Panc1 (cell line): ENCODE measurements at regions of chr5 and their contacts with region 1.

Region 1: GRCh38 chr5:932628-933250 is 40.1 kb downstream of the TRIP13 start:
- DNase-seq: no peak
- ATAC-seq: no peak
- H3K4me3 ChIP-seq: no peak overlapping the region
- H3K27ac ChIP-seq: no peak overlapping the region
- H3K4me1 ChIP-seq: no peaks in the 10 kb centered on the region
- H3K27me3 ChIP-seq: no peaks in the 10 kb centered on the region
- CTCF ChIP-seq: no peak

Region 2: GRCh38 chr5:998246-999031 is 65.7 kb after region 1 on chr5:
- CTCF ChIA-PET with region 1: no interaction called
- POLR2A ChIA-PET with region 1: interaction called, 15 read pairs
- in situ Hi-C with region 1: no loop called
- intact Hi-C with region 1: no loop called
- DNase-seq: no peak
- ATAC-seq: no peak
- H3K4me3 ChIP-seq: no peak overlapping the region
- H3K27ac ChIP-seq: no peak overlapping the region
- H3K4me1 ChIP-seq: no peaks in the 10 kb centered on the region
- H3K27me3 ChIP-seq: no peaks in the 10 kb centered on the region
- CTCF ChIP-seq: no peak

Region 3: DNA sequence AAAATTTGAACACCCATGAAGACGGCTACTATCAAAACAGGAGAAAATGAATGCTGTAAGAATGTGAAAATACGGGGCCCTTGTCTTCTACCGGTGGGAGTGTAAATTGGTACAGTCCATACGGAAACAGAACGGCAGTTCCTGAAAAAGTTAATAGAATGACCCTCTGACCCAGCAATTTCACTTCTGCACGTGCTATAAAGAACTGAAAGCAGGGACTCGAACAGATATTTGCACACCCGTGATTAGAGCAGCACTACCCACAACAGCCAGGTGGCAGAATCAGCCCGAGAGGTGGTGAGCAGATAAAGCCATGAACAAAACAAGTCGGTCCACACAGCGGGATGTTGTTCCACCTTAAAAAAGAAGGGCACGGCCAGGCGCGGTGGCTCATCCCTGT is 201.7 kb after region 1 on chr5:
- CTCF ChIA-PET with region 1: no interaction called
- POLR2A ChIA-PET with region 1: no interaction called
- in situ Hi-C with region 1: no loop called
- intact Hi-C with region 1: no loop called
- DNase-seq: no peak
- ATAC-seq: no peak
- H3K4me3 ChIP-seq: no peak overlapping the region
- H3K27ac ChIP-seq: peak overlapping the region; percentile 57; the same call in 1 of the 2 replicates
- H3K4me1 ChIP-seq: peaks cover 48% of the 10 kb centered on the region
- H3K27me3 ChIP-seq: no peaks in the 10 kb centered on the region
- CTCF ChIP-seq: no peak

Region 4: GRCh38 chr5:1227669-1228068 is 294.9 kb after region 1 on chr5:
- CTCF ChIA-PET with region 1: no interaction called
- POLR2A ChIA-PET with region 1: no interaction called
- in situ Hi-C with region 1: no loop called
- intact Hi-C with region 1: no loop called
- DNase-seq: no peak
- ATAC-seq: 0 out of 2 replicates have a peak, but pooled peaks have one; percentile 35
- H3K4me3 ChIP-seq: no peak overlapping the region
- H3K27ac ChIP-seq: no peak overlapping the region
- H3K4me1 ChIP-seq: peaks cover 4% of the 10 kb centered on the region
- H3K27me3 ChIP-seq: no peaks in the 10 kb centered on the region
- CTCF ChIP-seq: no peak